ENCODE measurements at regions of chr6 and their contacts with region 1.

Region 1: DNA sequence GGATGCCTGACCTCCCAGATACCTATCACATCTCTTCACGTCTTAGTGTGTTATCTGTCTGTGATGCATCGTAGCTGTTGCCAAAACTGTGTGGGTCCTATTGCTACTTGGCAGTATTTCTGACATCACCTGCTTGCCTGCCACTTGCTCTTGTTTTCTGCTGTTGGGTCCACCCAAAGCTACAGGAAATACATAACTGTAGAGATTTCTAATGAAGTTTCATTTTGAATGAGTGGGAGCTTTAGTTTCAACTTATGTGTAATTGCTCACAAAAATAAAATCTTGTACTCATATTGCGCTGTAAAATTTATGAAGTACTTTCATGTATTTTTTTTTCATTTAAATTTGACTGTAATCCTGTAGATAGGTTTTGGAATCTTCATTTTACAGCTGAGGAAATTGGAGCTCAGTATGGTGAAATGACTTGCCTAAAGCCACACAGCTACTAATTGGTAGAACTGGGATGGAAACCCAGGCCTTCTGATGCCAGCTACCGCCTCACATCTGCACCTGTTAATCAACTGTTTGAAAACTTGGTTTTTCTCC is 113.6 kb upstream of the MAN1A1 start:
- DNase-seq: peak; percentile 27
- H3K4me3 ChIP-seq: no peak overlapping the region
- H3K27ac ChIP-seq: no peak overlapping the region
- H3K4me1 ChIP-seq: peaks cover 23% of the 10 kb centered on the region
- CTCF ChIP-seq: no peak

Region 2: DNA sequence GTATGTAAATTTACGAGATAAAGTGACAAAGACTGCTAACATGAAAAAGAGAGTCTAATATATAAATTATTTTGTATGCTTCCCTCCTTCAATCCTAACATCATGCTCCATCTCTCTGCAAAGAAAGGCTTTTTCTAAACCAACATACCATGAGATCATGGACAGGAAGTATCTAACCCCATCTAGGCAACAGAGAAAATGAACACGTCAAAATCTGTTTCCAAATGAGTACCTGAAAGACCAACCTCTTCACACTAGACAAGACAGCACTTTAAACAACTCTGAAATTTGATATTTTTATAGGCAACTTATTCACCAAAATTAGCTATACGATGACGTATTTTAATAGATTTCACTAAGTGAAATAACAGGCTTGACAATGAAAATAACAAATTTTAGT is 168.2 kb before region 1 on chr6:
- CTCF ChIA-PET with region 1: no interaction called
- POLR2A ChIA-PET with region 1: no interaction called
- intact Hi-C with region 1: no loop called
- DNase-seq: no peak
- H3K4me3 ChIP-seq: no peak overlapping the region
- H3K27ac ChIP-seq: no peak overlapping the region
- H3K4me1 ChIP-seq: no peaks in the 10 kb centered on the region
- CTCF ChIP-seq: no peak

Region 3: DNA sequence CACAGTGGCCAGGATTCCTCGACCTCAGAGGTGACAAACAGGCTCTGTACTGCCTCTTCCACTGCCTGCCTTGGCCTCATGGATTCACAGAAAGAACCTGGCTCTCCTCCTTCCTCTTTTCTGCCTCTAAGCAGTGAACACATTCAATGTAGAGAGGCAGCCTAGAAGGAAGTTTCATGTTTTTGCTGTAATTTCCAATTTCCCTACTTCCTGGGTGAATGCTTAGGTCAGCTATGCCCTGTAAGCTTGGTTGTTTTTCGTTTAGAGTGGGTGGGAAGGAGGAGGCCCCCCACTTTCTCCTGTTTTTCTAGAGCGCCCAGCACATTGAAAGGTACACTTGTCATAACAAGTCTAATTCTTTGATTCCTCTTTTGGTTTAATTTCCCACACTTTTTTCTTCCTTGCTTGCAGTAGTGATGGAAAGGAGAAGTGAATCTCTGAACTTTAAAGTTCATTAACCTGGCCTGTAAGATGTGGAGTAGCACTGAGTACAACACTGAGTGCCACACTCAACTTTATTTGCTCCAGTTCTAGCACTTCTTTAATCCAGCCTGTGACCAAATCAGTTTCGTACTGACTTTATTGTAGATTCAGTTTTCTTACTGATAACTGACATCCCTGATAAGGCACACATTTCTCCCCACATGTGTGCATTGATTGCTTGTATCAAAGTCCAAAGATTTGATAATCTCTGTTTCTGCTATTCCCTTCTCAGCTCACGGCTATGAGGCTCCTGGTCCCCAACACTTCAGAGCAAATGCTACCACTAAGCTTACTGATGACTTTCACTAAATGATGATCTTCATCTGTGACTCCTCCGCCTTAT is 13.6 kb before region 1 on chr6:
- CTCF ChIA-PET with region 1: interaction called, 4 read pairs
- POLR2A ChIA-PET with region 1: interaction called, 30 read pairs
- intact Hi-C with region 1: no loop called
- DNase-seq: peak; percentile 53
- H3K4me3 ChIP-seq: no peak overlapping the region
- H3K27ac ChIP-seq: peak overlapping the region; percentile 56
- H3K4me1 ChIP-seq: peaks cover 74% of the 10 kb centered on the region
- CTCF ChIP-seq: no peak